HepG2 (cell line): ENCODE measurements at regions of chr1 and their contacts with region 1.

Region 1: DNA sequence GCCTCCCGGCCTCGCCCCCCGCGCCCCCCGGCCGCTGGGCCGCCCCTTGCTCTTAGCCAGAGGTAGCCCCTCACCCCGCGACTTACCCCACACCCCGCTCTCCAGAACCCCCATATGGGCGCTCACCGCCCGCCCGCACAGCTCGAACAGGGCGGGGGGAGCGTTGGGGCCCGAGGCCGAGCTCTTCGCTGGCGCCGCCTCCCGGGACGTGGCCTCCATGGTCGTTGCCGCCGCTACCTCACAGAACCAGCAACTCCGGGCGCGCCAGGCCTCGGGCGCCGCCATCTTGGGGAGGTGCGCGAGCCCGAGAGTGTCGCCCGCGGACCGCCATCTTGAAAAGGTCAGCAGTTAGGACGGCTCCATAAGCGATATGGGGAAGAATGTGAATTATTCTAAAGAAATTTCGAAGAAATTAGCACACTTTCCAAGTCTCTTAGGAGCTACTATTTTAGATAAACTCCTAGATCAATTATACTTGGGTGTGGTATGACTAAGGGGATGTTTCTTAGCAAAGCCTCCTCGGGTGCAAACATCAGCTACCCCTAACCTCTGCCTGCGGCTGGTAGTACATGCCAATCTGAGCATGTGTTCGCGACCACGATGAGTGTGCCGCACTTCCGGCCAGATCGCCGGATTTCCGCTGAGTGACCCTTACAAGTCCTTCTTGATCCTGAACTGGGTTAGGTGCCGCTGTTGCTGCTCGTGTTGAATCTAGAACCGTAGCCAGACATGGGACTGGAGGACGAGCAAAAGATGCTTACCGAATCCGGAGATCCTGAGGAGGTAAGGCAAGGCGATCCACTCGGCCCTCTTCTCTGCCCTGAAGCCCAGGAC is at the starts of genes LRRC41 and UQCRH:
- DNase-seq: peak; percentile 96
- ATAC-seq: peak; percentile 83
- H3K4me3 ChIP-seq: peak within 1 kb of the TSS; percentile 93 to 100 (median 96)
- H3K27ac ChIP-seq: peak within 1 kb of the TSS; percentile 96
- H3K4me1 ChIP-seq: peaks cover 52% of the 10 kb centered on the region
- H3K27me3 ChIP-seq: peaks cover 0 to 4% of the 10 kb centered on the region in 2 experiments; a peak in 1 of 5 replicates
- CTCF ChIP-seq: peak; percentile 35
- EP300 ChIP-seq: 0 out of 4 replicates have a peak, but pooled peaks of 1 of the 2 experiments have one; percentile 5
- POLR2A ChIP-seq: peak; percentile 84 to 85
- RAD21 ChIP-seq: no peak
- total RNA-seq, gene LRRC41: 51.9 and 53.6 TPM in 2 replicates
- total RNA-seq, gene UQCRH: 556 and 776 TPM in 2 replicates

Region 2: DNA sequence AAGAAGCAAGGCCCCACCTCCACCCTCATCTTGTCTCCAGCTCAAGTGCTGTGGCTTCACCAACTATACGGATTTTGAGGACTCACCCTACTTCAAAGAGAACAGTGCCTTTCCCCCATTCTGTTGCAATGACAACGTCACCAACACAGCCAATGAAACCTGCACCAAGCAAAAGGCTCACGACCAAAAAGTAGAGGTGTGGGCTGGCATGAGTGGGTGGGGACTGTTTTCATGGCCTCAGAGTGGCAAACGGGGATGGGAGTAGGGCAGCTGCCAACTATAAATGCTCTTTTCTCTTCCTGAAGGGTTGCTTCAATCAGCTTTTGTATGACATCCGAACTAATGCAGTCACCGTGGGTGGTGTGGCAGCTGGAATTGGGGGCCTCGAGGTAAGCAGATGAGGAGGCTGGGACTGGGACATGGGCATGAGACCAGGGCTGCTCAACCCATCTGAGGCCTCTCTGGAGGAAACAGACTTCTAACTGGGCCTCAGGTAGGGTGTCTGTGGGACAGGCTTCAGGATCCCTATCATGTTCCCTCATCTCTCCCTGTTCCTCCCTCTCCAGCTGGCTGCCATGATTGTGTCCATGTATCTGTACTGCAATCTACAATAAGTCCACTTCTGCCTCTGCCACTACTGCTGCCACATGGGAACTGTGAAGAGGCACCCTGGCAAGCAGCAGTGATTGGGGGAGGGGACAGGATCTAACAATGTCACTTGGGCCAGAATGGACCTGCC is 118.2 kb before region 1 on chr1:
- CTCF ChIA-PET with region 1: no interaction called
- POLR2A ChIA-PET with region 1: no interaction called
- in situ Hi-C with region 1: no loop called
- intact Hi-C with region 1: no loop called
- DNase-seq: no peak
- ATAC-seq: no peak
- H3K4me3 ChIP-seq: no peak overlapping the region
- H3K27ac ChIP-seq: no peak overlapping the region
- H3K4me1 ChIP-seq: peaks cover 55% of the 10 kb centered on the region
- H3K27me3 ChIP-seq: no peaks in the 10 kb centered on the region
- CTCF ChIP-seq: no peak
- EP300 ChIP-seq: no peak
- POLR2A ChIP-seq: no peak
- RAD21 ChIP-seq: no peak

Region 3: GRCh38 chr1:46197964-46198811 is 105.1 kb before region 1 on chr1 and contains the start of gene POMGNT1:
- CTCF ChIA-PET with region 1: no interaction called
- POLR2A ChIA-PET with region 1: no interaction called
- in situ Hi-C with region 1: no loop called
- intact Hi-C with region 1: no loop called
- DNase-seq: peak; percentile 23
- ATAC-seq: peak; percentile 89
- H3K4me3 ChIP-seq: peak within 1 kb of the TSS; percentile 89 to 98 (median 93)
- H3K27ac ChIP-seq: peak within 1 kb of the TSS; percentile 78
- H3K4me1 ChIP-seq: peaks cover 31% of the 10 kb centered on the region
- H3K27me3 ChIP-seq: 0 out of 5 replicates have a peak, but pooled peaks cover 0 to under 1% of the 10 kb centered on the region in 2 experiments
- CTCF ChIP-seq: peak; percentile 67
- EP300 ChIP-seq: no peak
- POLR2A ChIP-seq: peak; percentile 82 to 86
- RAD21 ChIP-seq: 0 out of 2 replicates have a peak, but pooled peaks have one; percentile 14
- total RNA-seq, gene POMGNT1: 25.5 and 33.9 TPM in 2 replicates

Region 4: GRCh38 chr1:46247436-46248121 is 55.7 kb before region 1 on chr1 and contains the start of gene RAD54L:
- CTCF ChIA-PET with region 1: no interaction called
- POLR2A ChIA-PET with region 1: interaction called, 21 read pairs
- in situ Hi-C with region 1: no loop called
- intact Hi-C with region 1: loop called (anchors 5 kb)
- DNase-seq: peak; percentile 97
- ATAC-seq: peak; percentile 89
- H3K4me3 ChIP-seq: peak within 1 kb of the TSS; percentile 85 to 88 (median 85)
- H3K27ac ChIP-seq: peak within 1 kb of the TSS; percentile 92
- H3K4me1 ChIP-seq: peaks cover 69% of the 10 kb centered on the region
- H3K27me3 ChIP-seq: no peaks in the 10 kb centered on the region; a peak in 1 of 5 replicates
- CTCF ChIP-seq: 0 out of 2 replicates have a peak, but pooled peaks have one; percentile 5
- EP300 ChIP-seq: no peak
- POLR2A ChIP-seq: peak; percentile 72 to 93
- RAD21 ChIP-seq: 0 out of 2 replicates have a peak, but pooled peaks have one; percentile 9
- total RNA-seq, gene RAD54L: 30.0 and 30.1 TPM in 2 replicates

Region 5: GRCh38 chr1:46333300-46334029 is 30.2 kb after region 1 on chr1:
- CTCF ChIA-PET with region 1: no interaction called
- POLR2A ChIA-PET with region 1: interaction called, 10 read pairs
- in situ Hi-C with region 1: no loop called
- intact Hi-C with region 1: no loop called
- DNase-seq: peak; percentile 63
- ATAC-seq: peak; percentile 97
- H3K4me3 ChIP-seq: no peak overlapping the region
- H3K27ac ChIP-seq: no peak overlapping the region
- H3K4me1 ChIP-seq: peaks cover 13% of the 10 kb centered on the region
- H3K27me3 ChIP-seq: no peaks in the 10 kb centered on the region
- CTCF ChIP-seq: peak; percentile 70
- EP300 ChIP-seq: no peak
- POLR2A ChIP-seq: no peak
- RAD21 ChIP-seq: no peak

Region 6: GRCh38 chr1:46340404-46341221 is 37.4 kb after region 1 on chr1 and contains the start of gene NSUN4:
- CTCF ChIA-PET with region 1: no interaction called
- POLR2A ChIA-PET with region 1: interaction called, 7 read pairs
- in situ Hi-C with region 1: no loop called
- intact Hi-C with region 1: loop called (anchors 2 kb)
- DNase-seq: peak; percentile 85
- ATAC-seq: peak; percentile 92
- H3K4me3 ChIP-seq: peak within 1 kb of the TSS; percentile 79 to 88 (median 85)
- H3K27ac ChIP-seq: peak within 1 kb of the TSS; percentile 97
- H3K4me1 ChIP-seq: peaks cover 51% of the 10 kb centered on the region
- H3K27me3 ChIP-seq: no peaks in the 10 kb centered on the region; a peak in 1 of 5 replicates
- CTCF ChIP-seq: peak; percentile 93
- EP300 ChIP-seq: no peak
- POLR2A ChIP-seq: peak; percentile 72 to 81
- RAD21 ChIP-seq: no peak
- total RNA-seq, gene NSUN4: 23.5 and 27.1 TPM in 2 replicates

Region 7: DNA sequence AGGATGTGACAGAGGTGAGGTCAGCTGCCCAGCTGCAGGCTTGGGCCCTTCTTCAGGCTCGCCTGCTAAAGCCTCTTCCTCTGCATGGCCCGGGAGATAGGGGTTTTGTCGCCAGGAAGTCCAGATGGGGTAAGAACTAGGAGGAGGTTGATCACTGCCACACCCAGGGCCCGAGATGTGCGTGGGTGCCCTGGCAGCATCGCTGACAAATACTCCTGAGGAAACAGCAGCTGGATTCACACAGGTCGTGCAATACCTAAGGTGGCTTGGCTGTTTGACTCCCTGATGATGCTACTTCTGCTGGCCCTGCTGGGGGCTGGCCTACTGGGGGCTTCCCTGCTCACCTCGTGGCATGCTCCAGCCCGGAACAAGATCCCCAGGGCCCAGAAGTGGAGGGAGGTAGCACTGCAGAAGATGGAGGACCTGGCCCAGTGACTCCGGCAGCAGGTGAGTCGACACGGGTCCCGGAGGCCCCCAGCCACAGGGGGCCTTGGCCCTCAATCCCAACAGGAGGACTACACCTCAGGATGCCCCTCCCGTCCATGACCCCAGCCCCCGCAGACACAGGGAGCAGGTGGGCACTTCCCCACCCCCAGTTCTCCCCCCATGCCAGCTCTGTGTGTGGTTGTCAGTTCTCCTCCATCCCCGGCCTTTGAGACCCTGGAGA is 120.5 kb after region 1 on chr1:
- CTCF ChIA-PET with region 1: no interaction called
- POLR2A ChIA-PET with region 1: no interaction called
- in situ Hi-C with region 1: no loop called
- intact Hi-C with region 1: no loop called
- DNase-seq: no peak
- ATAC-seq: no peak
- H3K4me3 ChIP-seq: no peak overlapping the region
- H3K27ac ChIP-seq: no peak overlapping the region
- H3K4me1 ChIP-seq: peaks cover 20% of the 10 kb centered on the region
- H3K27me3 ChIP-seq: peaks cover 0 to 13% of the 10 kb centered on the region in 2 experiments; a peak in 2 of 5 replicates
- CTCF ChIP-seq: no peak
- EP300 ChIP-seq: no peak
- POLR2A ChIP-seq: no peak
- RAD21 ChIP-seq: no peak